GM13977 (cell line): ENCODE measurements at regions of chr2 and their contacts with region 1.

Region 1: DNA sequence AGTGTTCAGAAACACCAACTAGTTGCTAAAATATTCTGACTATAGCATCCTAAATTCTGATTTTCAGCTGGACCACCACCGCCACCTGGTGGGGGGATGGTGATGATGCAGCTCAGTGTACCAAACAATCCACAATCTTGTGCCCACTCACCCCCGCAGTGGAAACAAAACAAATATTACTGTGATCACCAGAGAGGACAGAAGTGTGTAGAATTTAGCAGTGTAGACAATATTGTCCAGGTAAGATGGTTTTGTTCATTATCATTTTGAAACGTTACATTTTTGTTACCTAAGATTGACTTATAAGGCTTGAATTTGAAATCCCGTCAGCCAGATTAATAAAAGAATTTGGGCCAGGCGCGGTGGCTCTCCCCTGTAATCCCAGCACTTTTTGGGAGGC is 31.7 kb upstream of the UBXN4 start:
- DNase-seq: peak; percentile 72
- CTCF ChIP-seq: peak; percentile 86

Region 2: DNA sequence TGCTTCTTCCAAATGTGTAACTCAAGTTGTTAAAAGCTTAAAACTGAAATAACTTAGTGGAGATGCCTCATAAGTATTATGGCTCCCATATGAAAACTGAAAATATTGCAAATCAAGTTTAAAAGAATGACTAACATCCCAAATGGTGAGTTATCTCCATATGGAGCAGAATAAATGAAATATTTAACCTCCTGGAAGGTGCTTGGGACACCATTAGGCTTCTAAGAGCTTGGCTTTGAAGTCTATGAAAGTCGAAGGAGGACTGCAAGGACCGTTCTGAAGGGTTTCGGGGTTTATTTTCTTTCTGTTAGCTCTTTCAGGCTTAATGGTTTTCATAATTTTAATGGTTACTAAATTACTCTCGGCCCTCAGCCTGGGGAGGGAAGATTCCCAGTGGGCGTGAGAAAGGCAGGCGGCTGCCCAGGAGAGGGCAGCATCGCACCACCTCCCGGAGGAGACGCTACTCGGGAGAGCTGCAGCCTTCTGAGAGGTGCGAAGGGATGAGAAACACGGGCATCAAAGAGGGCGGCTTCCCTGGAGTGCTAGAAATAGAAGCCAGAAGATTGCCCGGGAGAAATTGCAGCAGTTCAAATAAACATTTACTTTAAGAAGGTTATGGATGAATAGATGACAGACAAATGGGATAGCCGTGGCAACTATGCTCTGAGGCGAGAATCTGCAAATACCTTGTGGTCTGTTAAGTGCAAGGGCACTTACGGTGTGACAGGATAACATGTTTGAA is 705.8 kb before region 1 on chr2:
- in situ Hi-C with region 1: loop called (anchors 25 kb)
- DNase-seq: peak; percentile 74
- CTCF ChIP-seq: peak; percentile 96

Region 3: DNA sequence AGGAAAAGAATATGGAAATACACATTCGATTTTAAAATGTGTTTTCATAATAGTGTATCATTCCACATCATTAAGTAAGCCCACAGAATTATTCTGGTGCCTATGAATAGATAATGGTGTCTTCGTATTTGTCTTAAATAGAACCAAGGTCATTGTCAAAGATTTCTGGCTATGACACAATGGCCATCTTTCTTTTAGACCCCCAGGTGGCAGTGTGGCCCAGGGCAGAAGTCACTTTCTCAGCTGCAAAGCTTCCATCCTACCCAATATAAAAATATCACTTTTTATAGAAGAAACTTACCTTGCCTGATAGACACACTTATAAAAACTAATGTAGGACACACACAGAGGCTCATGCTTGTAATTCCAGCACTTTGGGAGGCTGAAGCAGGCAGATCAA is 236.4 kb before region 1 on chr2:
- in situ Hi-C with region 1: loop called (anchors 10 kb)
- DNase-seq: peak; percentile 34
- CTCF ChIP-seq: peak; percentile 52

Region 4: DNA sequence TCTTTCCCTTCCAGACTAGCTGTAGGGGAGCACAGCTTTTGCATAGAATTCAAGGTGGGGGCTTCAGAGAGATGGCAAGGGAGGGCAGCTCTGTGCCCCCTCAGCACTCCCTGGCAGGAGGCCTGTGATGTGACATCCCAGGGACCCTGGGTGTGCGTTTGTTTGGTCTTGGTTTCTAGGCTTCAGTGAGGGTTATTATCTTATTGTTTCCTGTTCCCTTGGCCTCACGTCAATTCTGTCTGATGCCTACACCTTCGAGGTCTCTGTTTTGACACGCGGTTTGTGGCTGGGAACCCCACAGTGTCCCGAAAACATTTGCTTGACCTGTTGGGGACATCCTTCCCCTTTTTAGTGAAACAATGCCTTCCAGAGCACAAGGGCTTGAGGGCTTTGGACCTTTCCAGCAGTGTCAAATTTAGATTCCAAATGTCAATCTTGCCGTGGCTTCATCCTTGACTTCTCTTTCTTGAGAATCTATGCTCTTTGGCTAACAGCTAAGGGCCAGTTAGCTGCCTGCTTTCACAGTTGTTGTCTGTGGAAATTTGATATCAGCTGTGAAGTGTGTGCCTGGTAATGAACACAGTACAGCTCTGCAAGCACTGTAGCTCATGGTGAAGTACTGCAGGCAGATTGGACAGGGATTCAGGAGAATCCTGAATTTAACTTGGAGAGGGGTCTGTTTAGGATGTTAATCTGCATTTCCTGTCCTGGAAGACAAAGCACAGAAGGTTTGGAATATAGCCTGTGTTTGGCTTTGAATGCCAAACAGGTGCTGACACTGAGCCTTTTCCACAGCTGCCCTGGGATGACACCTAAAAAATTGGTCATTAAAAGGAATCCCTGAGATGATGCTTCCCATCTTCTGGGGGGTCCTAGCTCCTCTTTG is 516.2 kb after region 1 on chr2:
- in situ Hi-C with region 1: no loop called
- DNase-seq: no peak
- CTCF ChIP-seq: no peak